ENCODE measurements at regions of chr17 and their contacts with region 1.

Region 1: GRCh38 chr17:8300627-8301242 is 5.5 kb upstream of the SLC25A35 start:
- DNase-seq: peak; percentile 29 to 86 (median 63)
- ATAC-seq: peak; percentile 93
- H3K4me3 ChIP-seq: no peak overlapping the region
- H3K4me3 Mint-ChIP-seq: no peak overlapping the region
- H3K27ac ChIP-seq: no peak overlapping the region
- H3K27ac Mint-ChIP-seq: peak overlapping the region; percentile 55
- H3K4me1 ChIP-seq: peaks cover 4% of the 10 kb centered on the region
- H3K4me1 Mint-ChIP-seq: peaks cover 9% of the 10 kb centered on the region
- H3K27me3 ChIP-seq: no peaks in the 10 kb centered on the region
- H3K27me3 Mint-ChIP-seq: no peaks in the 10 kb centered on the region
- CTCF ChIP-seq: peak; percentile 76

Region 2: DNA sequence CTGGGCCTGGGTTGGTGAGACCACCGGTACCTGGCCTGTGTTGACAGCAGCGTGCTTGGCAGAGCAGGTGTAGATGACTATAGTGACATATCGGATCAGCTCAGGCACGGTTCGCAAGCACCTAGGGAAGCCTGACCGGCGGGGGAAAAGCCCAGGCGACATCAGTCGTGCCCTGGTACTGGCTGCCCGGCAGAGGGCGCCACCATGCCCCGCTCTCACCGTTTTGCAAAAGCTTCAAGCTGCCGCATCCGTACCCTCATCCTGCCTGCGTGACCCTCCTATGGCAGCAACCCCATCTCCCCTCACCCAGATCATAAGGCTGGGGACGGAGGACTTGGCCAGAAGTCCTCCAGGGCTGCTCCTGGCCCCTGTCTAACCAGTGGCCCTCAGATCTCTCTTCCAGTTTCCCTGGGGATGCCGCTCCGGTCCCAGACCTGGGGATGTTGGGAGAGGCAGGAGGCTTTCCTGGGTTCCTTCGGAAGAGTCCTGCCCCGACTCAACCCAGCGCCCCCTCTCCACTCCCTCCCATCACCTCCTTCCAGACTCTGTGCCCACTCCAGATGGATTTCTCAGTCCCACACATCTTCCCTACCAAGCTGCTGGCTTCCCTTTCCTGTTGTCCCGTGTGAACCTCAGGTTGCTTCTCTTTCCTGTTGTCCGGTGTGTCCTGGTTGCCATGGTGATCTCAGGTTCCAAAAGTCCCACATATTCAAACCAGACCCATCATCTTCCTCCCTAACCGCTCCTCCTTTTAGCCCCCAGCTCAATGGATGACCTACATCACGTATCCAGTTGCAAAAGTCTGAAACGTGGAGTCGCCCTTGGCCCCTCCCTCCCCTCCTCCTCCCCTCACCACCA is 226.9 kb before region 1 on chr17:
- CTCF ChIA-PET with region 1: interaction called, 15 read pairs
- POLR2A ChIA-PET with region 1: interaction called, 3 read pairs
- intact Hi-C with region 1: no loop called
- DNase-seq: peak; percentile 74 to 93 (median 88)
- ATAC-seq: peak; percentile 96
- H3K4me3 ChIP-seq: peak overlapping the region in 1 of 2 experiments; percentile 45
- H3K4me3 Mint-ChIP-seq: peak overlapping the region; percentile 84
- H3K27ac ChIP-seq: no peak overlapping the region
- H3K27ac Mint-ChIP-seq: peak overlapping the region; percentile 37
- H3K4me1 ChIP-seq: peaks cover 22% of the 10 kb centered on the region
- H3K4me1 Mint-ChIP-seq: peaks cover 22% of the 10 kb centered on the region
- H3K27me3 ChIP-seq: peaks cover 11 to 22% of the 10 kb centered on the region in 2 experiments
- H3K27me3 Mint-ChIP-seq: peaks cover 36% of the 10 kb centered on the region
- CTCF ChIP-seq: peak; percentile 89

Region 3: DNA sequence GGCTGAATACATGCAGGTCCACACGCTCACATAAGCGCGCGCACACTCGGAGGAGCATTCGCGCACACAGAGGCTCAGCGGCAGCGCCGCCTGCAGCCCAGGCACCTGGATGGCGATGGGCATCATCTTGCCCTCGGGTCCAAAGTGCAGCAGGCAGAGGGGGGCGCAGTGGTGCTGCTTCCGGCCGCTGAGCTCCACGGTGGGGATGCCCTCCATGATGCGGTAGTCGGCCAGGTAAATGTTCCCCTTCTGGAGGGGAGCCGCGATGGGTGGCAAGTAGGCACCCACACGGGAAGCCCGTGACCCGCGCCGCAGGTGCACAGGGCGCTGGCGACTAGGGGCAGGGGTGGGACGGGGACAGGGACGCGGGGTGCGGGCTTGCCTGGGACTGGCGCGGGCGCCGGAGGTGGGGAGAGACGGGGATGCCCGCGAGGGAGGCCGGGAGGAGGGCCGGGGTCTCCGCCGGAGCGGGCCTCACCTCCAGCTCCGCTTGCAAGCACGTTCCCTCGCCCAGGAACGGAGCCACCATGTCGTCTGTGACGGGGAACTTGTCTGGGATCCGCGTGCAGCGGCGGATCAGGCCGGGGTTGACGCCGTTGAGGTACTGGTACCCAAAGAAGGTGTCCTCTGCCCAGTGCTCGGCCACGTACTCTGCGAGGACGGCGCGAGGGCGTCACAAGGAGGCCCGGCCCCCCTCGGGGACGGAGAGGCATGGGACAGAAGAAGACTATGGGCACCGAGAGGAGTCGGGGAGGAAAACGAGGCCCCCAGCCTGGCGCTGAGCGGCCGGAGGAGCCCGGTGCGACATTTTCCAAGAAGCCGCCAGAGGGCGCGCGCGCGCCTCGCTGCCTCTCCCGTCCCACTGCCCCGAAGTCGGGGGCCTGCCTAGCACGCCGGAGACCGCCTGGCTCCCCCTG is 221.2 kb before region 1 on chr17:
- CTCF ChIA-PET with region 1: interaction called, 15 read pairs
- POLR2A ChIA-PET with region 1: no interaction called
- intact Hi-C with region 1: loop called in 1 of 2 experiments (anchors 5 kb)
- DNase-seq: peak; percentile 64 to 93 (median 82)
- ATAC-seq: peak; percentile 83
- H3K4me3 ChIP-seq: peak overlapping the region; percentile 64 to 80
- H3K4me3 Mint-ChIP-seq: peak overlapping the region; percentile 90
- H3K27ac ChIP-seq: peak overlapping the region; percentile 57 to 71
- H3K27ac Mint-ChIP-seq: peak overlapping the region; percentile 91
- H3K4me1 ChIP-seq: peaks cover 7% of the 10 kb centered on the region
- H3K4me1 Mint-ChIP-seq: peaks cover 18% of the 10 kb centered on the region
- H3K27me3 ChIP-seq: peaks cover 2% of the 10 kb centered on the region in 2 experiments
- H3K27me3 Mint-ChIP-seq: peaks cover 6% of the 10 kb centered on the region
- CTCF ChIP-seq: peak; percentile 89

Region 4: DNA sequence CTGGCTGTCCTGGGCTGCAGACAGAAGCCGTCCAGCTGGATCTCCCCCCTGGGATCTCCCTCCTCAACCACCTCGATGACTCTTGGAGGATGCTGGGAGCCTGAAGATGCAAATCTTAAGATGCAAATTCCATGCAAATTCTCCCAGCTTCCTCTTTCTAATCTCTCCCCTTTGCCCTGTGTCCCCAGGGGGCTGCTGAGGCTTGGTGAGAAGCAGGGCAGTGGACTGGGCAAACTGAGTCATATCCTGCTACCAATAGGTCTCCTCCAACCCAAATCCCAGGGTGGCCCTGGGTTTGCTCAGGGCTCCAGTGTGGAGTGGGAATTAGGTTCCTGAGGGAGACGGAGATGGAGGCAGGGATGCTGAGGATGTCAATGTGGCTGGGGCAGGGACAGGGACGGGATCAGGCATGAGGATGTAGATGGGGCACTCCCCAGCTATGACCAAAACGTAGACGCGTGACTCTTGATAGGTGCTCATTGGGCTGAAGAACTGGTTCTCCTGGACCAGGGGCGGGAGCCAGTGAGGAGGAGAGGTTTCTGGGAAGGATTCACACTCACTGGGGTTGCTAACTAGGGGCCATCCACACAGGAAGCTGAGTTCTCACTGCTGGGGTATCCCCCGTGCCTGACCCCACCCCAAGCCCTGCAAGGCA is 209.6 kb before region 1 on chr17:
- CTCF ChIA-PET with region 1: interaction called, 9 read pairs
- POLR2A ChIA-PET with region 1: no interaction called
- intact Hi-C with region 1: loop called in 1 of 2 experiments (anchors 1 kb)
- DNase-seq: peak in 1 of 9 experiments; percentile 28
- ATAC-seq: no peak
- H3K4me3 ChIP-seq: no peak overlapping the region
- H3K4me3 Mint-ChIP-seq: no peak overlapping the region
- H3K27ac ChIP-seq: no peak overlapping the region
- H3K27ac Mint-ChIP-seq: no peak overlapping the region
- H3K4me1 ChIP-seq: peaks cover 11% of the 10 kb centered on the region
- H3K4me1 Mint-ChIP-seq: peaks cover 8% of the 10 kb centered on the region
- H3K27me3 ChIP-seq: peaks cover 0 to 5% of the 10 kb centered on the region in 2 experiments
- H3K27me3 Mint-ChIP-seq: peaks cover 33% of the 10 kb centered on the region
- CTCF ChIP-seq: no peak

Region 5: GRCh38 chr17:8156246-8156992 is 144.3 kb before region 1 on chr17:
- CTCF ChIA-PET with region 1: interaction called, 4 read pairs
- POLR2A ChIA-PET with region 1: interaction called, 5 read pairs
- intact Hi-C with region 1: loop called in 1 of 2 experiments (anchors 1 kb)
- DNase-seq: peak; percentile 100
- ATAC-seq: peak; percentile 68
- H3K4me3 ChIP-seq: peak overlapping the region; percentile 82 to 90
- H3K4me3 Mint-ChIP-seq: no peak overlapping the region
- H3K27ac ChIP-seq: peak overlapping the region; percentile 100
- H3K27ac Mint-ChIP-seq: no peak overlapping the region
- H3K4me1 ChIP-seq: peaks cover 77% of the 10 kb centered on the region
- H3K4me1 Mint-ChIP-seq: peaks cover 68% of the 10 kb centered on the region
- H3K27me3 ChIP-seq: no peaks in the 10 kb centered on the region
- H3K27me3 Mint-ChIP-seq: no peaks in the 10 kb centered on the region
- CTCF ChIP-seq: no peak

Region 6: GRCh38 chr17:8288336-8289102 is 12.2 kb before region 1 on chr17 and contains the start of gene RANGRF:
- CTCF ChIA-PET with region 1: interaction called, 5 read pairs
- POLR2A ChIA-PET with region 1: interaction called, 3 read pairs
- intact Hi-C with region 1: loop called in 1 of 2 experiments (anchors 1 kb)
- DNase-seq: peak; percentile 38 to 89 (median 79)
- ATAC-seq: peak; percentile 94
- H3K4me3 ChIP-seq: peak within 1 kb of the TSS; percentile 73 to 82
- H3K4me3 Mint-ChIP-seq: peak within 1 kb of the TSS; percentile 97
- H3K27ac ChIP-seq: peak within 1 kb of the TSS; percentile 77 to 89
- H3K27ac Mint-ChIP-seq: peak within 1 kb of the TSS; percentile 97
- H3K4me1 ChIP-seq: peaks cover 17% of the 10 kb centered on the region
- H3K4me1 Mint-ChIP-seq: peaks cover 39% of the 10 kb centered on the region
- H3K27me3 ChIP-seq: no peaks in the 10 kb centered on the region
- H3K27me3 Mint-ChIP-seq: no peaks in the 10 kb centered on the region
- CTCF ChIP-seq: no peak
- total RNA-seq, gene RANGRF: 18.9 to 20.2 TPM

Region 7: GRCh38 chr17:8326511-8327302 is 26.0 kb after region 1 on chr17:
- CTCF ChIA-PET with region 1: interaction called, 12 read pairs
- POLR2A ChIA-PET with region 1: no interaction called
- intact Hi-C with region 1: no loop called
- DNase-seq: peak in 6 of 9 experiments; percentile 12 to 54 (median 36)
- ATAC-seq: peak; percentile 42
- H3K4me3 ChIP-seq: peak overlapping the region; percentile 37 to 72
- H3K4me3 Mint-ChIP-seq: peak overlapping the region; percentile 70
- H3K27ac ChIP-seq: no peak overlapping the region
- H3K27ac Mint-ChIP-seq: no peak overlapping the region
- H3K4me1 ChIP-seq: peaks cover 14% of the 10 kb centered on the region
- H3K4me1 Mint-ChIP-seq: peaks cover 16% of the 10 kb centered on the region
- H3K27me3 ChIP-seq: peaks cover 24 to 28% of the 10 kb centered on the region in 2 experiments
- H3K27me3 Mint-ChIP-seq: peaks cover 40% of the 10 kb centered on the region
- CTCF ChIP-seq: no peak